ENCODE measurements at regions of chr3 and their contacts with region 1.

Region 1: DNA sequence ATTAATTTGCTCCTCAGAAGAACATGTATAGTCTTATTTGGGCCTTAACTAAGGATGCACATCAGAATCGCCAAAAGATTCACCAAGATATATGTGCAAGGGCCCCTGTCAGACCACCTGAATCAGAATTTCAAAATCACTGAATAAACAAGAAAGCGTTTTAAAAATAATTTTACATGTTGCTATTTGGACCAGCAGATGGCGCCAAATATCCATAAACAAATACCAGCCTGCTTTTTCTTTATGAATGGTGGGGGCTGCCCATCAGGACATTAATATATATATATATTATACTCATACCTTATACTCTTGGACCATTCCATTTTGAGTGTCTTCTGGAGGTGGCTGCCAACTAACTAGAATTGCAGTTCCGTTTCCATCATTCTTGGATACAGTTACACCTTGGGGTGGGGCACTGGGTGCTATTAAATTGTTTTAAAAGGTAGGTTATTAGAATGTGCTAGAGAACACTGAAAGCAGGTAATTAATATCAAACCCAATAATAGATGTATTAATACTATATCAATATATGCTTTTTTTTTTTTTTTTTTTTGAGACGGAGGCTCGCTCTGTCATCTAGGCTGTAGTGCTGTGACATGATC is 1108.3 kb downstream of the ROBO1 start:
- DNase-seq: no peak
- ATAC-seq: peak; percentile 16 to 27
- H3K4me3 ChIP-seq: no peak overlapping the region
- H3K27ac ChIP-seq: no peak overlapping the region
- H3K4me1 ChIP-seq: no peaks in the 10 kb centered on the region
- H3K27me3 ChIP-seq: no peaks in the 10 kb centered on the region
- CTCF ChIP-seq: peak; percentile 52 to 68 (median 57)
- POLR2A ChIP-seq: no peak

Region 2: GRCh38 chr3:79027593-79027992 is 368.1 kb after region 1 on chr3:
- in situ Hi-C with region 1: loop called in 3 of 4 experiments (anchors 5 to 10 kb)
- intact Hi-C with region 1: loop called (anchors 1 kb)
- DNase-seq: no peak
- ATAC-seq: no peak
- H3K4me3 ChIP-seq: no peak overlapping the region
- H3K27ac ChIP-seq: no peak overlapping the region
- H3K4me1 ChIP-seq: no peaks in the 10 kb centered on the region
- H3K27me3 ChIP-seq: no peaks in the 10 kb centered on the region
- CTCF ChIP-seq: no peak
- POLR2A ChIP-seq: no peak

Region 3: GRCh38 chr3:79032686-79033318 is 373.3 kb after region 1 on chr3:
- in situ Hi-C with region 1: loop called (anchors 5 to 10 kb)
- intact Hi-C with region 1: loop called (anchors 1 kb)
- DNase-seq: no peak
- ATAC-seq: peak in 1 of 2 donors; percentile 49
- H3K4me3 ChIP-seq: no peak overlapping the region
- H3K27ac ChIP-seq: no peak overlapping the region
- H3K4me1 ChIP-seq: no peaks in the 10 kb centered on the region
- H3K27me3 ChIP-seq: no peaks in the 10 kb centered on the region
- CTCF ChIP-seq: peak; percentile 25 to 69 (median 57)
- POLR2A ChIP-seq: no peak

Region 4: DNA sequence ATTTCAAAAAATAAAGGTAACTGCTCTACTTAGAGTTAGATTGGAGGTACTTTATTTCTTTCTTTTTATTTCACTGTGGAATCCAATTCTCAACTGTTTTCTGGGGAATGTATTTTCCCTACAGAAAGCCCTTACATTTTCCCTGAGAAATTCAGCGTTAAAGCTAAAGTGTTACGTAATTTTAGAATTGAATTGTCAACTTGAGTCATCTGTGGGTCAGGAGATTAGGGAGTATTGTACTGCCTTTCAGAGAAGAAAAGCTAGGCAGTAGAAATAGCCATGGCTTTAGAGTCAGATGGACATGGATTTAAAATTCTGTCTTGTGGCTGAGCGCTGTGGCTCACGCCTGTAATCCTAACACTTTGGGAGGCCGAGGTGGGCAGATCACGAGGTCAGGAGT is 379.7 kb after region 1 on chr3:
- in situ Hi-C with region 1: loop called in 1 of 4 experiments (anchors 5 kb)
- intact Hi-C with region 1: no loop called
- DNase-seq: no peak
- ATAC-seq: no peak
- H3K4me3 ChIP-seq: no peak overlapping the region
- H3K27ac ChIP-seq: no peak overlapping the region
- H3K4me1 ChIP-seq: no peaks in the 10 kb centered on the region
- H3K27me3 ChIP-seq: no peaks in the 10 kb centered on the region
- CTCF ChIP-seq: no peak
- POLR2A ChIP-seq: no peak

Region 5: GRCh38 chr3:79361748-79362378 is 702.4 kb after region 1 on chr3:
- in situ Hi-C with region 1: loop called in 2 of 4 experiments (anchors 25 kb)
- intact Hi-C with region 1: loop called (anchors 5 kb)
- DNase-seq: no peak
- ATAC-seq: no peak
- H3K4me3 ChIP-seq: no peak overlapping the region
- H3K27ac ChIP-seq: no peak overlapping the region
- H3K4me1 ChIP-seq: no peaks in the 10 kb centered on the region
- H3K27me3 ChIP-seq: no peaks in the 10 kb centered on the region
- CTCF ChIP-seq: peak in 3 of 5 experiments; percentile 14 to 62 (median 59)
- POLR2A ChIP-seq: no peak